Left cardiac atrium (tissue), 4 donors: ENCODE measurements at regions of chr12 and their contacts with region 1.

Region 1: GRCh38 chr12:27243804-27244683 is at the start of gene STK38L:
- DNase-seq: peak; percentile 98
- ATAC-seq: peak; percentile 99
- total RNA-seq, gene STK38L: 70.6 to 135 TPM

Region 2: DNA sequence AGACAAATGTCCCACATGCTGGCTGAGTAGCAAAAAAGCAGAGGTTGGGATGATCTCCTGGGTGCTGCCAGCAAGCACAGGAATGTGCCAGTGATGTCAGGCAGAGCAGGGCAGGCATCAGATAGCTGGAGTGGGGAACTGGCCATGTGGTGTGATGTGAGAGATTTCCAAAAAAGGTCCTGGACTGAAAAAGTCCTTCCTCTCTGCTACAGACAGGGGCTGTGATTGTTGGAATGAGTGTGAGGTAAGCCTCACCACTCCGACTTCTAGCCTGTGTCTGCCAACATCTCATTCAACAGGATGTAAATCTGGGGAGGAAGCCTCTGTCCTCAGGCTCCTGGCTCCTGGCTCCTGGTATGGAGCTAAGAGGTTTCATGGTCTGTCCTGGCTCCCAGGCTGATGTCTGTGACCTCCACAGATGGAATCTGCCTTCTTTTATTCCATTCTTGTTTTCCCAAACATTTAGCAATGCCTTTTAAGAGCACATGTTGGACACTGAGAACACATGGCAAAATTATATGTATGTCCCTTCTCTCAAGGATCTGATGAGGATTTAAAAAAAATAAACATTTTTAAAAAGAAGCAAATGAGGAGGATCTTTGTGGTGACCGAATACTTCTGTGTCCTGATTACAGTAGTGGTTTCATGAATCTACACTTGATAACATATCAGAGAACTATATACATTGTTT is 50.0 kb before region 1 on chr12:
- intact Hi-C with region 1: loop called in 1 of 2 experiments (anchors 5 kb)
- DNase-seq: peak; percentile 62
- ATAC-seq: peak; percentile 90 to 93